Vagina (tissue), 2 donors: ENCODE measurements at regions of chr1 and their contacts with region 1.

Region 1: GRCh38 chr1:156927215-156928042 is 7.0 kb downstream of the LRRC71 start:
- DNase-seq: no peak
- H3K4me3 ChIP-seq: peak overlapping the region in 1 of 2 donors; percentile 33
- H3K27ac ChIP-seq: no peak overlapping the region
- H3K4me1 ChIP-seq: peaks cover 24% of the 10 kb centered on the region
- H3K27me3 ChIP-seq: peaks cover 16% of the 10 kb centered on the region
- CTCF ChIP-seq: peak; percentile 38 to 61 (median 43)
- POLR2A ChIP-seq: no peak

Region 2: GRCh38 chr1:156860113-156860627 is 67.3 kb before region 1 on chr1:
- intact Hi-C with region 1: no loop called
- DNase-seq: no peak
- H3K4me3 ChIP-seq: peak overlapping the region; percentile 40 to 51
- H3K27ac ChIP-seq: peak overlapping the region; percentile 62
- H3K4me1 ChIP-seq: peaks cover 29% of the 10 kb centered on the region
- H3K27me3 ChIP-seq: no peaks in the 10 kb centered on the region
- CTCF ChIP-seq: peak; percentile 71 to 85 (median 77)
- POLR2A ChIP-seq: no peak

Region 3: DNA sequence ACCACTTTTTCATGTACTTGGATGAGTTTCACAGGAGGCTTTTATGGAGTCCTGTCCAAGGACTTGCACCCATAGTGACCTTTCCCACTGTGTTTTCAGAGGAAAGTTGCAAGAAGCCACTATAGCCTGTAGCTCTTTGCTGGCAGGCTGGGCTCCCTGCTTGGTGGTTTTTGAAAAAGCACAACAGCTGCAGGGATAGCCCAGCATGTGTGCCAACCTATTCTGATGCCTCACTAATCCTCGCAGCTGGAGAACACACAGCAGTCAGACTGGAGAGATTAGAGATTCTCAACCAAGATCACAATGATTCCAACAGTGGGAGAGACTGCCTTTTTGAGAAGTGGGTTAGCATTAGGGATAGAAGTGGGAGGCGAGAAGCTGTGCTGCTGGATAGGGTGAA is 142.2 kb after region 1 on chr1:
- intact Hi-C with region 1: loop called (anchors 10 kb)
- DNase-seq: no peak
- H3K4me3 ChIP-seq: no peak overlapping the region
- H3K27ac ChIP-seq: no peak overlapping the region
- H3K4me1 ChIP-seq: peaks cover 9% of the 10 kb centered on the region
- H3K27me3 ChIP-seq: no peaks in the 10 kb centered on the region
- CTCF ChIP-seq: no peak
- POLR2A ChIP-seq: no peak